Activated CD4-positive, alpha-beta T cell treated with anti-CD3 and anti-CD28 coated beads for 36 hours (primary cell): ENCODE measurements at regions of chr14 and their contacts with region 1.

Region 1: GRCh38 chr14:50773632-50774541 is 57.1 kb downstream of the NIN start:
- DNase-seq: peak; percentile 60
- ATAC-seq: peak; percentile 68
- H3K4me3 Mint-ChIP-seq: no peak overlapping the region
- H3K27ac Mint-ChIP-seq: no peak overlapping the region
- H3K4me1 Mint-ChIP-seq: peaks cover 24% of the 10 kb centered on the region
- H3K27me3 Mint-ChIP-seq: no peaks in the 10 kb centered on the region

Region 2: DNA sequence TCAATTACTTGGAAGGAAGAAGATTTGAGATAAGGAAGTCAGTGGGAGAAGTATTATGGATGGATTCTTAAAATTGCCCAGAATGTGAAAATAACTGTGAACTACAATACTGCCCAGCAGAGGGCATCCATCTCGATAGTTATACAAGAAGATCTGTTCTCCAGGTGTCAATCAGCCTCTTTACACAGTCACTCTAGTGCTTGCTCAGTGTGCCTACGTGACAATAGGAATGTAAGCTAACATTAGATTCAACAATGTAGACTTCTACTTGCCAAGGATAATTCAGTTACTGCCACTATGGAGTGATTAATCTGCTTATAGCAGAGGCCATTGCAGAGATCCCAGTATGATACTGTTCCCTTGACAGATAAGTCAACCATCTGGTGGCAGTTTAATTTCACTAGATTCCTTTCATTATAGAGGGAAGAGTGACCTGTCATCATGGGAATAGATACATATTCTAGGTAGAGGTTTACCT is 230.9 kb before region 1 on chr14:
- CTCF ChIA-PET with region 1: interaction called, 43 read pairs
- POLR2A ChIA-PET with region 1: no interaction called
- intact Hi-C with region 1: loop called (anchors 1 kb)
- DNase-seq: peak; percentile 58
- ATAC-seq: peak; percentile 98
- H3K4me3 Mint-ChIP-seq: no peak overlapping the region
- H3K27ac Mint-ChIP-seq: peak overlapping the region; percentile 72
- H3K4me1 Mint-ChIP-seq: peaks cover 16% of the 10 kb centered on the region
- H3K27me3 Mint-ChIP-seq: no peaks in the 10 kb centered on the region

Region 3: GRCh38 chr14:50607181-50607580 is 166.7 kb before region 1 on chr14:
- CTCF ChIA-PET with region 1: interaction called, 26 read pairs
- POLR2A ChIA-PET with region 1: no interaction called
- intact Hi-C with region 1: no loop called
- DNase-seq: peak; percentile 74
- ATAC-seq: peak; percentile 86
- H3K4me3 Mint-ChIP-seq: no peak overlapping the region
- H3K27ac Mint-ChIP-seq: no peak overlapping the region
- H3K4me1 Mint-ChIP-seq: peaks cover 4% of the 10 kb centered on the region
- H3K27me3 Mint-ChIP-seq: no peaks in the 10 kb centered on the region

Region 4: GRCh38 chr14:50667996-50668825 is 105.7 kb before region 1 on chr14 and contains the start of gene SAV1:
- CTCF ChIA-PET with region 1: interaction called, 5 read pairs
- POLR2A ChIA-PET with region 1: interaction called, 4 read pairs
- intact Hi-C with region 1: loop called in 1 of 2 experiments (anchors 5 kb)
- DNase-seq: peak; percentile 71
- ATAC-seq: peak; percentile 79
- H3K4me3 Mint-ChIP-seq: no peak within 1 kb of the TSS
- H3K27ac Mint-ChIP-seq: peak within 1 kb of the TSS; percentile 80
- H3K4me1 Mint-ChIP-seq: peaks cover 12% of the 10 kb centered on the region
- H3K27me3 Mint-ChIP-seq: no peaks in the 10 kb centered on the region
- total RNA-seq, gene SAV1: 13.6 TPM

Region 5: DNA sequence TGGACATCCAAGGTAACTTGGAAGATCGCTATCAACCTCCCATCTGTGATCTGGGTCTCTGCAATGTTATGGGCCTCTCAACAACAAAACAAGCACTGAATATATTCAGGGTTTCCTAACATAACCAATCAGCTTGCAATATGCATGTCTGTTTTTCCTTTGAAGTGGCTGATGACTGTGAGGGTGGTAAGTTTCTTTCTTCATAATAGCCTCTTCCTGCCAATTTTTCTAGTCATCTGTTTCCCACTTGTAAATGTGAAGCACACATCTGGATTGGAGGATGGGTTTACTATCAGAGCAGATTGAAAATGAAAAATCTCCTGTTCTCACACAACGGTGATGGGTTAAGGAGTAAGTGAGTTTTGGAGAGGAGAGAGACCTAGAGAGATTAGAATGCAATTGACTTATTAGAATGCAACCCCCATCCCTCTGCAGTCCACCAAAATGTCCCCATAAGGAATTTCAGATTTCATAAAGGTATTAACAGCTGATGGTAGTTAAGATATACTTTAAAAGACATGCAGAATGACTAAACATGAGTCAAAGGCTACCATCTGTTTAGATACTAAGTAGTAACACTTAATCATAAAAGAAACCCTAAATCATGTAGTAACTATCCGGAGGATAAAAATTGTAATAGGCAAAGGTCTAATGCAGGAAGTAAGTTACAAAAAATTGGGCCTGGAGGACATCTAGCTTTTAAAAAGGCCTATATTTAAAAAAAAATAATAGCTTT is 47.3 kb before region 1 on chr14:
- CTCF ChIA-PET with region 1: interaction called, 16 read pairs
- POLR2A ChIA-PET with region 1: no interaction called
- intact Hi-C with region 1: no loop called
- DNase-seq: peak; percentile 31
- ATAC-seq: peak; percentile 93
- H3K4me3 Mint-ChIP-seq: peak overlapping the region; percentile 39
- H3K27ac Mint-ChIP-seq: peak overlapping the region; percentile 95
- H3K4me1 Mint-ChIP-seq: peaks cover 32% of the 10 kb centered on the region
- H3K27me3 Mint-ChIP-seq: no peaks in the 10 kb centered on the region

Region 6: DNA sequence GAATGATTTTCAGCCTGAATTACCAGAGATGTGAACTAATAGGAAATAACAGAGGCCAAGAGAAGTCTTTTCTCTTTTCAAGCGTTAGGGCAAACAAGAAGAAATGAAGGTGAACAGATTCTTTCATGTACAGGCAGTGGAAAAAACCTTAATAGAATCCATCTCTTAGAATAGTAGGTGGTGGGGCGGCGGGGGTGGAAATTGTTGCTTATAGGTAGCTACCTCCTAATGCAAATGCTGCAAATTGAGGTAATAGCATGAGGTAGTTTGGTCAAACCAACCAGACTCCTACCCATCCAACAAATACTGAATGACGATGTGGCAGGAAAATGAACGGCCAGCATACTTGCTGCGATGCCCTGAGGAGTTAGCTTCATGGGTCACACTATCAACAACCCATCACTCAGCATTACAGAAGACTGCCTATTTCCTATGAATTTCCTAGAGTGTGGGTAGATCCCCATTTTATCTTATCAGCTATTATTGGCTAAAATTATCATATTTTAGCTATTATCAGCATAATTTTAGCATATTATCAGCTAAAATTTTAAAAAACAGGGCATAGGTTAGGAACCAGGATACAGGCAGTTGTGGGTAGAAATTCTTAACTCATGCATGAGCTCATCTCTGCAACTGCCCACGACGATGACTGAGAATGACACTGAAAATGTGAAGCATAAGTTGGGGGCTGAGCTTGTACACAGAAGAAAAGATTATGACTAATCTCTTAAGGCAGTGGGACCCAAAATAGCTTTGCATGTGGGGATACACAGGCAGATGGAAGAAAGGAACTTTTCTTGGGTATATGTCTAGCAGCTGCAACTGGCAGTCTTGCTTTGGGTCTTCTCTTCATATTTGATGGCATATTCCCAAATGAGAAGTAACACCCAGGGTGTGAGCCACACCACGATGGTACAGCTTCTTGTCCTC is 11.6 kb before region 1 on chr14:
- CTCF ChIA-PET with region 1: interaction called, 168 read pairs
- POLR2A ChIA-PET with region 1: no interaction called
- intact Hi-C with region 1: no loop called
- DNase-seq: peak; percentile 79
- ATAC-seq: peak; percentile 99
- H3K4me3 Mint-ChIP-seq: no peak overlapping the region
- H3K27ac Mint-ChIP-seq: peak overlapping the region; percentile 58
- H3K4me1 Mint-ChIP-seq: peaks cover 31% of the 10 kb centered on the region
- H3K27me3 Mint-ChIP-seq: no peaks in the 10 kb centered on the region